ENCODE measurements at regions of chr21 and their contacts with region 1.

Region 1: DNA sequence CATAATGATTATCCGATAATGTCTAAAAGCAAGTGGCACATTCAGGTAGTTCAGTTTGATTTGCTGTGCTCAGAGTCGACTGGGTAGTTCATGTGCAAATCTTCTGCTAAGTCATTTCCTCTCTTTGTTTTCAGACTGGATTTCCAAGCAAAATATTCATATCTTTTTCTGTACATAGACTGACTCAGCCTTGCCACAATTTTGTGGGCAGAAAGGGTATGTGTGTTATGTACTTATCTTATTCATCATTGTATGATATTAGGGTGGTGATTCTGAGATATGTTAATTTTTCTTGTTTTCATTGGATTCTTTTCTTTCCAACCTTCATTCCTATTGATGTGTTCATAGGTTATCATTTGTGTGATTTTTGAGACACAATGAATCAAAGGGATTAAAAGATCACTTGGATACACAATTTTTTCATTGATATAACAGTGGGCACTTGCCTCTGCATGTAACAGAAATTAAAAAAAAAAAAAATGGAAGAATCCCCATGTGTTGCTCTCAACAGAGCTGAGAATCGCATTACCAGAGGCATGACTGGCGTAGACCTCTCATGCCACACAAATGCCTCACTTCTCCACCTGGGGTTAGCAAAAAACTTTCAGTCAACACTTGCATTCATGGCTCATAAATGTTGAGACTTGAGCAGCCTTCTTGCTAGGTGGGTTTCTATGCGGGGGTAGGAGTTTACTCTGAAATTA is 355.5 kb downstream of the LTN1 start:
- DNase-seq: no peak
- ATAC-seq: no peak
- H3K4me3 ChIP-seq: peak overlapping the region in 1 of 2 donors; percentile 48
- H3K27ac ChIP-seq: peak overlapping the region; percentile 91 to 100
- H3K4me1 ChIP-seq: peaks cover 10 to 13% of the 10 kb centered on the region in 2 donors
- H3K27me3 ChIP-seq: no peaks in the 10 kb centered on the region

Region 2: DNA sequence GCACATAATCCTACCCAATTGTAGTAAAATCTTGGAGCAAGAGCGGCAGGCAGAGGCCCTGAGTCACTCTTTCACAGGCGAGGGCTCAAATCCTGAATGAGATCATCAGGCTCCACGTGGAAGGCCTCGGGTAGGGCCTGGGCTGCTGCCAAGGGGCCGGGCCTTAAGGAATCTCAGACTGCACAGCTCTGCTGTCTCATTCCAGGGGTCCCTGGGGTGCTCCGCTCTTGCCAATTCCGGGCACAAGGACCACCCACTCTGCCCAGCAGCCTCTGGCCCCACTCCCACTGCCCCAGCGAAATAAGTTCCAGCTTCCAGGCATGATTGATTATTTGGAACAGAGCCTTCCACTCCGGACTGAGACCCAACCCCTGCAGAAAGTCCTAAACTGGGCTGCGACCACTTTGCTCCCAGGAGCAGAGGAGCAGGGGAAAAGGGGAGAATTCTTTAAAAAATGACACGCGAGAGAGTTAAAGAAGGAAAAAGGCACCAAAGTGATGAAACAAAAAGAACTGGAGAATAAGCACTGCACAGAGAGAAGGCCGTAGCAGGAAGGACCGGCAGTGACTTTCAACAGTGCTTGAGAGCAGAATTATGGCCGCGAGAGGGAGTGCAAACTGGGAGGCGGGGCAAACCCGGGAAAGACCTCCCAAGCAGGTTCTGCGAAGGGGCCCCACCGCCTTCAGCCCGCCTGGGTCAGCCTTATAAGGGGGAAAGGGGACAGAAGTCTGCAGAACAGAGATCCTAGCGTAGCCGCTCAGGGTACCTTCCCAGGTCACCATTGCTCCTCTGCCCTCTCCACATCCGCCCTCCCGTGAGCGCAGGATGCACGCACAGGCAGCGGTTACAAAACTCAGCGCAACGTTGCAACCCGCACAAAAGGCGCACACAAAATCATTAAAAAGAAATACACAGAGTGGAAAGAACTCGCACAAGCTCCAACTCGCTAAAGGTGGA is 1793.9 kb before region 1 on chr21:
- intact Hi-C with region 1: loop called in 1 of 2 experiments (anchors 10 kb)
- DNase-seq: peak; percentile 95 to 97
- ATAC-seq: peak; percentile 75
- H3K4me3 ChIP-seq: peak overlapping the region; percentile 88 to 93
- H3K27ac ChIP-seq: peak overlapping the region in 1 of 2 donors; percentile 87
- H3K4me1 ChIP-seq: no peaks in the 10 kb centered on the region
- H3K27me3 ChIP-seq: no peaks in the 10 kb centered on the region

Region 3: GRCh38 chr21:28375708-28376385 is 261.3 kb before region 1 on chr21:
- intact Hi-C with region 1: loop called in 1 of 2 experiments (anchors 5 kb)
- DNase-seq: no peak
- ATAC-seq: no peak
- H3K4me3 ChIP-seq: no peak overlapping the region
- H3K27ac ChIP-seq: peak overlapping the region; percentile 16 to 79
- H3K4me1 ChIP-seq: peaks cover 0 to 4% of the 10 kb centered on the region in 2 donors
- H3K27me3 ChIP-seq: no peaks in the 10 kb centered on the region

Region 4: DNA sequence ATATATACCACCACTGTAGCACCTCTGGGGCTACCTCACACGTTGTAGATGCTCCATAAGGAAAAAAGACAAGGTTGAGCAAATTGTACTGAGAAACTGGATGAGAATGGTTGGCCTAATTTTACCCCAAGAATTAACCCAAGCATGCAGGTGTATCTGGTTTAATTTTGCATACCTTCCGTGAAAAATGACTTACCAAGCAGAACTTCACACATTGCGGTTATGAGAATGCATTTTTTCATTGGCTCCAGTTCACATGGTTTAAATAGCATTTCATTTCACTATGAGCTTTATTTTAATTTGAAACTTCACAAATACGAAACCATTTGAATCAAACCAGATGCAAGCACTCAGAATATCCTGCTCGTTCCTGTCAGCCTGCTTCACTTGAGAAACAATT is 156.7 kb before region 1 on chr21:
- intact Hi-C with region 1: loop called in 1 of 2 experiments (anchors 10 kb)
- DNase-seq: no peak
- ATAC-seq: no peak
- H3K4me3 ChIP-seq: no peak overlapping the region
- H3K27ac ChIP-seq: no peak overlapping the region
- H3K4me1 ChIP-seq: peaks cover 0 to 4% of the 10 kb centered on the region in 2 donors
- H3K27me3 ChIP-seq: no peaks in the 10 kb centered on the region

Region 5: DNA sequence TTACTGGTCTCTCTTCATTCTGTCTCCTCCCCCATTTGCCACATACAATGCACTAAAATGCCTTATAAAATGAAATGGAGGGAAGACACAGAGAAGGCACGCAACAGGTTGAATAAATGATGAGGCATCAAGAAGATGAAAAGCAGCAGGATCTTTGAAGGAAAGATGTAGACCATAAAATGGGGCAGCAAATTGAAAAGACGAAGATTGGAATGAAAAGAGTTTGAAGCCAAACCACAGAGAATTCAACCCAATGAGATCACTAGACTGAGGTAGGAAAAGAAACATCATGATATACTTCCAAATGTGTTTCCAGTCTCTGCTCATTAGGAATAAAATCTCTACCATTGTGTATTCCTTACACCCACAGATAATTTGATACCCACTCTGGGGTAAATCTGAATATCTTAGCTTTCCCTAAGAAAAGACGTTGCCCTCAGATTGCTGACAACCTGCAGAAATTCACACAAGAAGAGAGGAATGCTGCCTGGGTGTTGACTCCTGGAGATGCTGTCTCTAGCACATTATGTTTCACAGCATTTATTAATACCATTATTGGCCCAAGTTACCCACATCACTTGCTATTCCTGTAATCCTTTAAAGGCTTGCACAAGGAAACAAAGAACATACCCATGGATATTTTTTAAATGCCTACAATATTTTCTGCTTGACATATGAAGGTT is 124.7 kb after region 1 on chr21:
- intact Hi-C with region 1: loop called in 1 of 2 experiments (anchors 5 kb)
- DNase-seq: no peak
- ATAC-seq: no peak
- H3K4me3 ChIP-seq: no peak overlapping the region
- H3K27ac ChIP-seq: no peak overlapping the region
- H3K4me1 ChIP-seq: peaks cover 3 to 7% of the 10 kb centered on the region in 2 donors
- H3K27me3 ChIP-seq: no peaks in the 10 kb centered on the region

Region 6: GRCh38 chr21:29737186-29737585 is 1100.0 kb after region 1 on chr21:
- intact Hi-C with region 1: no loop called
- DNase-seq: no peak
- ATAC-seq: no peak
- H3K4me3 ChIP-seq: no peak overlapping the region
- H3K27ac ChIP-seq: no peak overlapping the region
- H3K4me1 ChIP-seq: peaks cover 0 to 3% of the 10 kb centered on the region in 2 donors
- H3K27me3 ChIP-seq: no peaks in the 10 kb centered on the region